ENCODE measurements at regions of chr14 and their contacts with region 1.

Region 1: GRCh38 chr14:67166450-67166853 is 22.8 kb upstream of the GARIN2 start:
- DNase-seq: no peak

Region 2: GRCh38 chr14:66716227-66716626 is 450.2 kb before region 1 on chr14:
- intact Hi-C with region 1: no loop called
- DNase-seq: no peak

Region 3: GRCh38 chr14:67285876-67286452 is 119.5 kb after region 1 on chr14:
- intact Hi-C with region 1: loop called (anchors 2 kb)
- DNase-seq: no peak

Region 4: GRCh38 chr14:67892466-67893100 is 726.1 kb after region 1 on chr14:
- intact Hi-C with region 1: no loop called
- DNase-seq: no peak